AG04449 (cell line): ENCODE measurements at regions of chr2 and their contacts with region 1.

Region 1: GRCh38 chr2:181573140-181573736 is 83.7 kb downstream of the CERKL start:
- DNase-seq: no peak
- H3K4me3 ChIP-seq: no peak overlapping the region
- CTCF ChIP-seq: peak; percentile 18

Region 2: DNA sequence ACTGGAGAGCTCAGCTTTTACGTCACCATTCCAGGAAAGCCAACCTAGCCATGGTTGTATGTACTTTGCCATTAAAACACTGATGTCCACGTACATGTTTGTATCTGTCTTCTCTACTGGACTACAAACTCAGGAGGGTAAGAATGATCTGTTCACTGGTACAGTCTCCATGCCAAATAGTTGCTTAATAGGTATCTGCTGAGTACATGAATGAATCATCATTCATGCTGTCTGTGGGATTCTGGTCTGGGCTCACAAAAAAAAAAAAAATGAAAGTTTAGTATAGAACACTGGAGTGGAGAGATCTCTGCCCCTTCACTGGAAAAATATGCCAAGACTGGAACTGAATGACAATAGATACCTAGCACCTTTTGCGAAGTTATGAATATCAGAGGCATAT is 218.6 kb before region 1 on chr2:
- CTCF ChIA-PET with region 1: no interaction called
- POLR2A ChIA-PET with region 1: no interaction called
- DNase-seq: peak; percentile 49
- H3K4me3 ChIP-seq: no peak overlapping the region
- CTCF ChIP-seq: no peak

Region 3: DNA sequence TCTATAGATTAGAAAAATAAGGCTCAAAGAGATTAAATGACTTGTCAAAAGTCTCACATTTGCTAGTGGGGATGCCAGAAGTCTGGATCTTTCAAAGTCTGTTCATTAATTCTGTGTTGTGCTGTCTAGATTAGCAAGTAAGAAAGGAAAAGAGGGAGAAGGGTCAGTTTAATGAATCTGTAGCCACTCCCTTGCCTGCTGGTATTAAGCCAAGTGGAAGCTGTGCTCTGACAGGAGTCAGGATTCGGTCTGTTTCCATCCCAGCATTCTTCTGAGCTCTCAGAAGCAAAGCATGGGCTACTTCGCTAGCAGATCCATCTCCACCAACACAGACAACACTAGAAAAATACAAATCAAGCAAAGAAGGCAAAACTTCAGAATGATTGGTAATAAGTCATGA is 14.9 kb before region 1 on chr2:
- CTCF ChIA-PET with region 1: interaction called, 11 read pairs
- POLR2A ChIA-PET with region 1: no interaction called
- DNase-seq: no peak
- H3K4me3 ChIP-seq: no peak overlapping the region
- CTCF ChIP-seq: no peak

Region 4: GRCh38 chr2:181715033-181715630 is 141.9 kb after region 1 on chr2:
- CTCF ChIA-PET with region 1: interaction called, 79 read pairs
- POLR2A ChIA-PET with region 1: no interaction called
- DNase-seq: peak; percentile 41
- H3K4me3 ChIP-seq: no peak overlapping the region
- CTCF ChIP-seq: peak; percentile 60

Region 5: GRCh38 chr2:181780047-181780651 is 206.9 kb after region 1 on chr2:
- CTCF ChIA-PET with region 1: no interaction called
- POLR2A ChIA-PET with region 1: no interaction called
- DNase-seq: no peak
- H3K4me3 ChIP-seq: no peak overlapping the region
- CTCF ChIP-seq: no peak

Region 6: GRCh38 chr2:183259921-183260320 is 1686.7 kb after region 1 on chr2:
- CTCF ChIA-PET with region 1: no interaction called
- POLR2A ChIA-PET with region 1: no interaction called
- DNase-seq: no peak
- H3K4me3 ChIP-seq: no peak overlapping the region
- CTCF ChIP-seq: no peak